Endothelial cell of umbilical vein (primary cell): ENCODE measurements at regions of chr12 and their contacts with region 1.

Region 1: GRCh38 chr12:77979597-77980250 is 149.0 kb downstream of the NAV3 start:
- DNase-seq: no peak
- H3K4me3 ChIP-seq: no peak overlapping the region
- H3K27ac ChIP-seq: peak overlapping the region; percentile 46
- H3K4me1 ChIP-seq: peaks cover 34% of the 10 kb centered on the region
- H3K27me3 ChIP-seq: no peaks in the 10 kb centered on the region
- CTCF ChIP-seq: no peak
- POLR2A ChIP-seq: no peak

Region 2: DNA sequence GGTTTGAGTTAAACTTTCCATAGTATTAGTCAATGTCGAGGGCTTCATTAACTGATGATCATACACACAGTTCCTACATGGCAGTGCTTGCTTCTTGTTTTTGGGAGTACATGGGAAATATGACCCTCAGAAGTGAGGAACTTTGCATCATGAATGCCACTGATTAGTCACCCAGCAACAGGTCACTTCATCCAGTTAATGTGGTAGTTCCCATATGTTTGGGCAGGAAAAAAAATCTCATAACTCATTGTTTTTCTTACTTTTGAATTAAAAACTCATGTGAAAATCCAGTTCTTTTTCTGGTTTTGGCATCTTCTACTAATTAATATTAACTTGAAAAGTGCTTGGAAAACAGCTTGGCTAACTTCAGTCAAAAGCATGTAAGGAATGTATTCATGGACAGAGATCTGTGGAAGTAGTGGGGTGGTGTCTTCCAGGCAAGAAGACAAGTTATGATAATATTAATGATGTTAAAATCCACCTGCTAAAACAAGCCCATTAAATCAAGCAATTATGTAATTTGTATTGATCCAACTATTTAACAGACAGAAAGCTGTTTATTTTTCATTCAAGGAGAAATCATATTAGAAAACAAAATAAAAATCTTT is 458.1 kb before region 1 on chr12:
- CTCF ChIA-PET with region 1: no interaction called
- POLR2A ChIA-PET with region 1: no interaction called
- dilution Hi-C with region 1: no loop called
- intact Hi-C with region 1: no loop called
- DNase-seq: no peak
- H3K4me3 ChIP-seq: no peak overlapping the region
- H3K27ac ChIP-seq: no peak overlapping the region
- H3K4me1 ChIP-seq: no peaks in the 10 kb centered on the region
- H3K27me3 ChIP-seq: no peaks in the 10 kb centered on the region
- CTCF ChIP-seq: no peak
- POLR2A ChIP-seq: no peak

Region 3: DNA sequence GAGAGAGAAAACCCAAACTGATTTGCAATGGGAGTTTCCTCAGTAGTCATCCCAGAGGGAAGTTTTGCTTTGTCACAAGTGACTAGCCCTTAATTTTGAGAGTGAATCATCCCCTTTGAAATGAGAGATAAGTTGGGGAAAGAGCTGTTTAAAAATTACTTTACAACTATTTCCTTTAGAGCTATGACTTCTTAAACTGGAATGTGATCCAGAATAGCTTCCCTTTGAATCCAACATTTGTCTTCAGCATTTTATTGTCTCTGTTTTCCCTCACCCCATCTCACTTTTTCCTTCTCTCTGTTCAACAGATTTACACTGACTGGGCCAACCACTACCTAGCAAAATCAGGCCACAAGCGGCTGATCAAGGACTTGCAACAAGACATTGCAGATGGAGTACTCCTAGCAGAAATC is 39.7 kb before region 1 on chr12:
- CTCF ChIA-PET with region 1: interaction called, 4 read pairs
- POLR2A ChIA-PET with region 1: no interaction called
- dilution Hi-C with region 1: no loop called
- intact Hi-C with region 1: loop called (anchors 2 kb)
- DNase-seq: peak; percentile 84
- H3K4me3 ChIP-seq: peak overlapping the region in 2 of 3 experiments; percentile 70 to 90
- H3K27ac ChIP-seq: peak overlapping the region; percentile 95
- H3K4me1 ChIP-seq: peaks cover 39% of the 10 kb centered on the region
- H3K27me3 ChIP-seq: no peaks in the 10 kb centered on the region
- CTCF ChIP-seq: no peak
- POLR2A ChIP-seq: peak; percentile 57

Region 4: DNA sequence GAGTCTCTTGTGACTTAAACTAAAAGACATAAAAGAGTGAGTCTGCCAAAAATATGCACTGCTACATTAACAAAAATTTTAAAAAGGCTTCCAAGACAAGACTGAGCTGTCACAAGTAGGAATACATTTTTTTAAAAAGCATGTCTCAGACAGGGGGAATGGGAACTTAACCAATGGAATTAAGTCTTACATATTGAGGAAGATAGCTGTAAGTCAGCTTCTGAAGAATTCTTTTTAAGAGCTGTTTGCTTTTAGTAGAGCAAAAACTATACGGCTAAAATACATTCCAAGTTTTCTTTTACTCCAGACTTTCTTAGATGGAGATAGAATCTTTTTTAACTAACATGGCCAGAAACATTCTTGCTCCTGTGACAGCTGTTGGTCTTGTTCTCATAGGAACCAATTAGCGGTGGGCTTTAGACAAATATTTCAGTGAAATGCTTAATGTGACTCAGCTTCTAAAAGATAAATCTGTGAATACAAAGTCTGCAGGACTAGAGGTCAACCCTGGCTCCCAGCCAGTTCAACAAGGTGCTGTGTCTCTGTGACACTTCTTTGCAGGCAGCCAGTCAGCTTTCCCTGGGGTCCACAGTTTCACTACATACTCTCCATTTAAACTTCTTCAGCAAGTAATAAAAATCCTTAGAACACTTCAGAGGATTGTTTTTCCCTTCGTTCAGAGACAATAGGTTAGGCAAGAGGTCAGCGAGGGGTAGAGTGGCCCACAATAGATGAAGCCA is 38.6 kb after region 1 on chr12:
- CTCF ChIA-PET with region 1: no interaction called
- POLR2A ChIA-PET with region 1: no interaction called
- dilution Hi-C with region 1: no loop called
- intact Hi-C with region 1: no loop called
- DNase-seq: no peak
- H3K4me3 ChIP-seq: no peak overlapping the region
- H3K27ac ChIP-seq: no peak overlapping the region
- H3K4me1 ChIP-seq: no peaks in the 10 kb centered on the region
- H3K27me3 ChIP-seq: no peaks in the 10 kb centered on the region
- CTCF ChIP-seq: no peak
- POLR2A ChIP-seq: no peak

Region 5: DNA sequence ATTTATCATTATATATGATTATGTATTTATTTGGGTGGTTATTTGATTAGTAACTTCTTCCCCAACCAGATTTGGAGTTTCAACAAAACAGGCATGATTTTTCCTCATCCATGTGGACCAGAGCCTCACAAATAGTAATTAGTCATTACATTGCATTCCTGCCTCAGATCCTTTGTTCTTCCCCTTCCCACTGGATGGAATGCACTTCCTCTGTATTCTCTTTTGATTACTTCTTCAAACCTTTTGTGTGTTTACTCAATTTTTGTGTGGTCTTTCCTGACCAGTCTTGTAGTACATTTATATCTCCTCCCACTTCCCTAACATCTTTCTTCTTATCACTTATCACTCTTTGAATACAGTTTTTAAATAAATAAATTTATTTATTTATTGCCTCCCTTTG is 900.4 kb after region 1 on chr12:
- CTCF ChIA-PET with region 1: no interaction called
- POLR2A ChIA-PET with region 1: no interaction called
- dilution Hi-C with region 1: no loop called
- intact Hi-C with region 1: loop called (anchors 5 kb)
- DNase-seq: peak; percentile 28
- H3K4me3 ChIP-seq: no peak overlapping the region
- H3K27ac ChIP-seq: peak overlapping the region; percentile 32
- H3K4me1 ChIP-seq: peaks cover 16% of the 10 kb centered on the region
- H3K27me3 ChIP-seq: no peaks in the 10 kb centered on the region
- CTCF ChIP-seq: no peak
- POLR2A ChIP-seq: no peak